ENCODE measurements at regions of chr6 and their contacts with region 1.

Region 1: DNA sequence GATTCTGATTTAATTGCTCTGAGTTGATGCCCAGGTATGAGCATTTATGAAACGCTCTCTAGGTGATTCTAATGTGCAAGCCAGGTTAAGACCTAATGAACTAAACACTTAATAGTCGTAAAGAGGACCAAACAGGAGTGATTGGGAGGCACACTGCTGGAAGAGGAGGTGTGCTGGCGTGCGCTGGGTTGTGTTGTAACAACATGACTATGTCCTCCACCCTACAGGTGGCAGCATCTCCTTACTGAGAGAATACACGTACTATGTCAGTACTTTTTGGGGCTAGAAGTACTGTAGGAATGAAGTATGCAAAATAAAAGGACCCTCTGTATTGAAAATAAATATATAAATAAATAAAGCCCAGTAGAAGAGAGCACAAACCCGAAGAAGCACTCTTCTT is 11.9 kb downstream of the C6orf89 start:
- DNase-seq: no peak
- H3K4me3 ChIP-seq: no peak overlapping the region
- H3K27ac ChIP-seq: no peak overlapping the region
- H3K4me1 ChIP-seq: peaks cover 29% of the 10 kb centered on the region
- H3K27me3 ChIP-seq: no peaks in the 10 kb centered on the region
- CTCF ChIP-seq: peak; percentile 44

Region 2: GRCh38 chr6:36692220-36692619 is 205.4 kb before region 1 on chr6:
- intact Hi-C with region 1: no loop called
- DNase-seq: no peak
- H3K4me3 ChIP-seq: no peak overlapping the region
- H3K27ac ChIP-seq: peak overlapping the region; percentile 55
- H3K4me1 ChIP-seq: peaks cover 22% of the 10 kb centered on the region
- H3K27me3 ChIP-seq: no peaks in the 10 kb centered on the region
- CTCF ChIP-seq: no peak

Region 3: DNA sequence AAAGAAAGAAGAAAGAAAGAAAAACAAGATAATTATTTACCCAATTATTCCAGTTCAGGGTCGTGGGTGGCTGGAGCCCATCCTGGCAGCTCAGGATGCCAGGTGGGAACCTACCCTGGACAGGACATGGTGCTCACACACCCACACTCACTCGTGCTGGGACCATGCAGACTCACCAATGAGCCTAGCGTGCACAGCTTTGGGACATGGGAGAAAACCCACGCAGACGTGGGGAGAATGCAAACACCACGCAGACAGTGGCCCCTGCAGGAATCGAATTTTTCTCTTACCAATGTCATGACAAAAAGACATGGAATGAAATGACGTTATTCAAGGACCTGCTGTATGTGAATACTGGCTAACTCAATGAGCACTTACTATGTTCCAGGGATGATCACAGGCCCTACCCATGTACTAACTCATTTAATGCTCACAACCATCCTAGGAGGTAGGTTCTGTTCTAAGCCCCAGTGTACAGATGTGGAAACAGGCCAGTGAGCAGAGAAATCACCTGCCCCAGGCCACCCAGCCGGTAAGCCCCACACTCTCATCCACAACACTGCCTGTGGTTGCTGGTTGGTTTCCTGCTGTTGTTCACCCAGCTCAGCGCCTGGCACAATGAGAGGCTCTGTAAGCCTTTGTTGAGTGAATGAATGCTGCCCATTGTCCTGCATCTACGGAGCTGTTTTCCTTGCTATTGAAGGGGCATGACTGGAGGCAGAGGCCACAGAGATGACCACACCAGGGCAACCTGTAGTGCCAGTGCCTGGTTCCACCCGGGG is 50.2 kb after region 1 on chr6:
- intact Hi-C with region 1: no loop called
- DNase-seq: no peak
- H3K4me3 ChIP-seq: no peak overlapping the region
- H3K27ac ChIP-seq: no peak overlapping the region
- H3K4me1 ChIP-seq: no peaks in the 10 kb centered on the region
- H3K27me3 ChIP-seq: no peaks in the 10 kb centered on the region
- CTCF ChIP-seq: no peak

Region 4: DNA sequence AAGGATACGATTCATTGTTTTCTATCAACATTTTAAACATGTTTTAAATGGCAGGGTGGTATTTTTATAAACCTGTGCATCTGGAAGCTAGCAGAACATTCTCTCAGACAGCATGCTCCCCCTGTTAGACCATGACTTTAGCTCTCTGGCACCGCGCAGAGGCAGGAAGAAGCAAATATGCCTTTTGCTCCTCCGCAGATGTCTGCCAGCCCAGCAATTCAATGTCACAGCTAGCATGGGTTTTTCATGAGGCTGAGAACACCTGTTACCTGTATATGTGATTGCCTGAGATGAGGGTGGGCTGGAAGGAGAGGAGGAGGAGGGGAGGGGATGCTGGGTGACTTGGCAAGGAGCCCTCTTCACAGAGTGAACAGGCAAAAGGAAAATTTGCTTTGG is 81.7 kb after region 1 on chr6:
- intact Hi-C with region 1: loop called (anchors 10 kb)
- DNase-seq: no peak
- H3K4me3 ChIP-seq: no peak overlapping the region
- H3K27ac ChIP-seq: peak overlapping the region; percentile 85
- H3K4me1 ChIP-seq: peaks cover 100% of the 10 kb centered on the region
- H3K27me3 ChIP-seq: no peaks in the 10 kb centered on the region
- CTCF ChIP-seq: peak; percentile 68

Measured in left ventricle myocardium inferior (tissue), 1 donor.